ENCODE measurements at regions of chr3 and their contacts with region 1.

Region 1: DNA sequence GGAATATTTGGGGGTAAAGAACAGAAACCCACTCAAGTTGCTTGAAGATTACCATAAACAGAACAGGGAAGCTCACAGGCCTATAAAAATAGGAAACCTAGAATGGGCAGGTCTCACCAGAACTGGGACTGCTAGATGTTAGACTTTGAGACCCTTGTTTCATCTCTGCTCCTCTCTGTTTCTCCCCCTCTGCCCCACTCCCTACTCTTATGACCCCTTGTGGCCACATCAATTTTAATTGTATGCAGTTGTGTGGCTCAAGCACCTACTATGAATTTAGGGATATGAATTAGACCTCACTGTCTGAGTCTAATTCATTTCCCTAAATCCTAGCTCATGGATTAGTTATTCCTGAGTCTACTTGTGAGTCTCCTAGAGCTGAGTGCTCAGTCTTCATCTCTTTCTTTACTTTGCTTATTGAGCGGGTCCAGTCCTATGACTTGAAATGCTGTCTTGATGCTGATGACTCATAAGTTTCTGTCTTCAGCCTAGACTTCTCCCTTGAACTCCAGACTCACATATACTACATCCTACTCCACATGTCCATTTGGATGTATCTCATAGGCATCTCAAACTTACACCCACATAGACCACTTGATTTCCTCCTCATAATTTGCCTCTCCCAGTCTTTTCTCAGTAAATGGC is 78.7 kb downstream of the ITPR1 start:
- DNase-seq: no peak
- ATAC-seq: peak; percentile 75
- H3K4me3 Mint-ChIP-seq: no peak overlapping the region
- H3K27ac Mint-ChIP-seq: peak overlapping the region; percentile 69
- H3K4me1 Mint-ChIP-seq: peaks cover 64% of the 10 kb centered on the region
- H3K27me3 Mint-ChIP-seq: no peaks in the 10 kb centered on the region
- CTCF ChIP-seq: no peak

Region 2: GRCh38 chr3:4350789-4351163 is 221.0 kb before region 1 on chr3:
- CTCF ChIA-PET with region 1: interaction called, 15 read pairs
- POLR2A ChIA-PET with region 1: no interaction called
- intact Hi-C with region 1: loop called (anchors 1 kb)
- DNase-seq: no peak
- ATAC-seq: peak; percentile 88
- H3K4me3 Mint-ChIP-seq: peak overlapping the region; percentile 44
- H3K27ac Mint-ChIP-seq: peak overlapping the region; percentile 8
- H3K4me1 Mint-ChIP-seq: peaks cover 9% of the 10 kb centered on the region
- H3K27me3 Mint-ChIP-seq: no peaks in the 10 kb centered on the region
- CTCF ChIP-seq: peak; percentile 26

Region 3: GRCh38 chr3:4466741-4467521 is 104.9 kb before region 1 on chr3 and contains the start of gene SUMF1:
- CTCF ChIA-PET with region 1: no interaction called
- POLR2A ChIA-PET with region 1: no interaction called
- intact Hi-C with region 1: loop called (anchors 1 kb)
- DNase-seq: peak; percentile 70
- ATAC-seq: peak; percentile 94
- H3K4me3 Mint-ChIP-seq: peak within 1 kb of the TSS; percentile 93
- H3K27ac Mint-ChIP-seq: peak within 1 kb of the TSS; percentile 96
- H3K4me1 Mint-ChIP-seq: peaks cover 16% of the 10 kb centered on the region
- H3K27me3 Mint-ChIP-seq: no peaks in the 10 kb centered on the region
- CTCF ChIP-seq: no peak
- total RNA-seq, gene SUMF1: 18.4 and 20.7 TPM in 2 replicates

Region 4: DNA sequence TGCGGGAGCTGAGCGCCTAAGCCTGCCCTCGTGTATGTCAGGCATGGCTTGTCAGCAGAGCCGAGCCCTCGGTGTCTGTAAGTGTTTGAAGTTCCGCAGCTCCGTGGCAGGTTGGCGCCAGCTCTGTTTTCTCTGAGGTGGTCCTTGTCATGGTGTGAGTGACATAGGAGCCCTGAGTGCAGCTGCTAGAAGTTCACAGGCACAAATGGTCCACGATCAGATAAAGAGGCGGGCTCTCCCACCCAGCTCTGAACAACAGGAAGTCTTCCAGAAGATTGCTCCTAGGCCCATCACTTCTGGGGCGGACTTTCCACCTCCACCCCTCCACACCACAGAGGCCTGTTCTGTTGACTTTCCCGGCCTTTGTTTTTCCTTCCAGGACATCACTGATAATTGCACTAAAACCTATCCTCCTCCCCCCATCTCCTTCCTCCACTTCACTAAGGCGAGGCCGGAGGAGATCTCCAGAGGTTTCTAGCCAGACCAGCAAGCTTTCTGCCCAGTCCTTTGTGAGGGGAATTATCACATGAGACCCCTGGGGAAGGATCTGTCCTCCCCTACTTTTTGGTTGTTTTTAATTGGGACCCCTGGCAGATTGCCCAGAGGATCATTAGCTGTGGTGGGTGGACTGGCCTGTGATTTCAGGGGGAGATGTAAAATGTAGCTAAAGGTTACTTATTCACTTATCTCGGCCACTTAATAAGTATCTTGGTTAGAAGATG is 58.8 kb before region 1 on chr3:
- CTCF ChIA-PET with region 1: interaction called, 4 read pairs
- POLR2A ChIA-PET with region 1: no interaction called
- intact Hi-C with region 1: loop called (anchors 2 kb)
- DNase-seq: no peak
- ATAC-seq: peak; percentile 13
- H3K4me3 Mint-ChIP-seq: no peak overlapping the region
- H3K27ac Mint-ChIP-seq: peak overlapping the region; percentile 67
- H3K4me1 Mint-ChIP-seq: peaks cover 96% of the 10 kb centered on the region
- H3K27me3 Mint-ChIP-seq: no peaks in the 10 kb centered on the region
- CTCF ChIP-seq: no peak

Region 5: DNA sequence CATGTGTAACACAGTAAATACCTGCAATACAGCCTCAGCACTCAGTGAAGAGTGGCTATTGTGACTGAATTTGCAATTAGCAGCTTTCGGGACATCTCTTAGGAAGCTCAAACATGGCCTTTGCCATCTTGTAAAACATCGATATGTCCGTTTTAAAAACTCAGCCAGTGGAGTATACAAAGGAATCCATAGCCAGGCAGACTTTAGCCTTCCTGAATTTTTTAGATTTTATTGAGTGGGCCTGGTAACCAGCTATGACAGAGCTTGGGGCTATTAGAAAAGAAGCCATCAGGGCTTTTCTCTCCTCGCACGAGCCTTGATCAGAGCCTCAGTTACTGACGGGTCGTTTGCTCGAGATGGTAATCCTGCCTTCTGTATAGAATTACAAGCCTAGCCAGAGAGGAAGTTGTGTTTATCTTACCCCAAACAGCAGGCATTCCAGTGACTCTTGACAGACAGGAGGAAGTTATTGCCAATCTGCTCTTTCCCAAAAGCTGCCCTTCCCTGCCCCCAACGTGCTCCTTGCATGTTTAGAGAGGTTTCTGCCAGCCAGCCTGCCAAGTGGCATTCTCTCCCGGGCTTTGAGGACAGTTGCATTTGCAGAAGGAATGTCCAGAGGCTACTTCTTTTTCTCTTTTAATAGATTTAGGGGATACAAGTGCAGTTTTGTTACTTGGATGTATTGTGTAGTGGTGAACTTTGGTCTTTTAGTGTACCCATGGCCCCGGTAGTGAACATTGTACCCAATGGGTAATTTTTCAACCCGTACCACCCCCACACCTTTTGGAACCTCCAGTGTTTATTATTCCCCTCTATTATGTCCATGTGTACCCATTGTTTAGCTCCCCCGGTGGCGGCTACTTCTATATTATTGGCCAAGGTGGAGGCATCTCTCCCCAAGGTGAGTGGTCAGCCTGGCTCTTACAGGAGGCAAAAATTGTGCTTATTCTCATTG is 38.0 kb before region 1 on chr3:
- CTCF ChIA-PET with region 1: no interaction called
- POLR2A ChIA-PET with region 1: no interaction called
- intact Hi-C with region 1: loop called (anchors 5 kb)
- DNase-seq: no peak
- ATAC-seq: no peak
- H3K4me3 Mint-ChIP-seq: no peak overlapping the region
- H3K27ac Mint-ChIP-seq: peak overlapping the region; percentile 65
- H3K4me1 Mint-ChIP-seq: peaks cover 76% of the 10 kb centered on the region
- H3K27me3 Mint-ChIP-seq: no peaks in the 10 kb centered on the region
- CTCF ChIP-seq: no peak

Region 6: DNA sequence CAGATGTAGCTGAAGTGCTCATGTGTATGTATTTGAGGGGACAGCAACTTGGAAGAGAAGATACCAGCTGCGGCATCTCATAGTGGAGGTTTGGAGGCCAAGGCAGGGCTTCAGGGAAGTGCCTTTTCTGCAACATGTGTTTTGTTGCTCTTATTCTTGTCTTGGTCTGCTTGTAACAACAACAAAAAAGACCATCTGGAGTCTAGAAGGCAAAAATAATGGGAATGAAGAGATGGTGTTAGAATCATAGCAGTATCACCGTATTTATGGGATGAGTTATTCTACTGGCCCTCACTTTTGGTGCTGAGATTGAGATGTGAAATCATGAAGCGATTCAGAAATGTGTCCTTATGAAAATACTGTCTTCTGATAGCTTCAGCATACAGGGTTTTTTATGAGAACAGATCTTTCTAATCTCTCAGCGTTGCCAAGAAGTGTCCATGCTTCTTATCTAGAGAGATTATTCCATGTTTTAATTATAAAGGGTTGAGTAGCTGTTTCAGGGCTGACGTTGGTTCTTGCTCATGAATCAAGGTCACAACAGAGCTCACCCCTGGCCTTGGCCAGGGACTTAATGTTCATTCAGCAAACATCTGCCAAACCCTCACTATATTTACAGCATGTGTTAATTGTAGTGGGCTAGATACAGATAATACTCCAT is 20.6 kb before region 1 on chr3:
- CTCF ChIA-PET with region 1: no interaction called
- POLR2A ChIA-PET with region 1: no interaction called
- intact Hi-C with region 1: loop called (anchors 2 kb)
- DNase-seq: no peak
- ATAC-seq: no peak
- H3K4me3 Mint-ChIP-seq: no peak overlapping the region
- H3K27ac Mint-ChIP-seq: peak overlapping the region; percentile 60
- H3K4me1 Mint-ChIP-seq: peaks cover 59% of the 10 kb centered on the region
- H3K27me3 Mint-ChIP-seq: no peaks in the 10 kb centered on the region
- CTCF ChIP-seq: no peak

Region 7: GRCh38 chr3:4584456-4585249 is 12.8 kb after region 1 on chr3:
- CTCF ChIA-PET with region 1: no interaction called
- POLR2A ChIA-PET with region 1: no interaction called
- intact Hi-C with region 1: loop called (anchors 1 kb)
- DNase-seq: no peak
- ATAC-seq: peak; percentile 30
- H3K4me3 Mint-ChIP-seq: peak overlapping the region; percentile 85
- H3K27ac Mint-ChIP-seq: peak overlapping the region; percentile 91
- H3K4me1 Mint-ChIP-seq: peaks cover 85% of the 10 kb centered on the region
- H3K27me3 Mint-ChIP-seq: no peaks in the 10 kb centered on the region
- CTCF ChIP-seq: no peak

Measured in activated B cell treated with CpG ODN at 0.5 μM for 24 hours (primary cell).